Caco-2 (cell line): ENCODE measurements at regions of chr6 and their contacts with region 1.

Region 1: DNA sequence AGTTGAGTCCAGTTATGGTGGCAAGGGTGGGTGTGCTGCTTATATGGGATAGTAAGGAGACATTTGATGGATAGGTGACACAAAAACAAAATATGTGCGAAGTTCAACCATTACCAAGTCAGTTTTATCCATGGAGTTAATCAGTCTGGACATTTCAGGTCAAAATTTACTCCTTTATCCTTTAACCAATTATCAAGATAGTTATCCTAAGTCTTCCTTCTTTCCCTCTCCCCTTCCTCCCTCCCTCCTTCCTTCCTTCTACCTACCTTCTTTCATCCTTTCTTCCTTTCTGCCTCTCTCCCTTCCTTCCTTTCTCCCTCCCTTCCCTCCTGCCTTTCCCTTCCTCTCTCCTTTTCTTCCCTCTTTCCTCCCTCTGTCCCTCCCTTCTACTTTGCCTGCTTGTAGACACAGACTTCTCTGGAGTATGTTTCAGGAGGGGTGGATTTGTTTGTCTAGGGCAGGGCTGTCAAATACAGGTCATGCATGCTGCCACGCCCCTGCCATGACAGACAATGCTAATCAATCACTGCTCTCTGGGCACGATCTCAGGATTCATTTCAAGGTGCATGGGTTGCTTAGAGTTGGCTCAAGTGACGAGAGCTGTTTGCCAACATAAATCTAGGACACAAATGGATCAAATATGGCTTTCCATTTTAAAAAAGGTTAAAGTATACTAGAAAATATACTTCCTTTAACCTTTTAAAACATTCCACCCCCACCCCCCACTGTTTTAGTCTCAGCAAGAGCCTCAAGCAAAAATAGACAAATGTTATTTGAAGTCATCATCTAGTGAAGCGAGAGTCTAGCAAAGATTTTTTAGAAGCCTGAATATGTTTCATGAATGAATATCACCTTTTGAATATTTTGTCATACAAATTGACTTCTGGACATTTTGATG is 281.6 kb upstream of the CITED2 start:
- DNase-seq: peak; percentile 81 to 90
- H3K4me3 ChIP-seq: no peak overlapping the region
- H3K4me3 Mint-ChIP-seq: peak overlapping the region; percentile 60
- H3K27ac Mint-ChIP-seq: peak overlapping the region; percentile 88
- H3K4me1 ChIP-seq: peaks cover 46% of the 10 kb centered on the region
- H3K4me1 Mint-ChIP-seq: peaks cover 33% of the 10 kb centered on the region
- H3K27me3 ChIP-seq: no peaks in the 10 kb centered on the region
- H3K27me3 Mint-ChIP-seq: no peaks in the 10 kb centered on the region
- CTCF ChIP-seq: no peak

Region 2: DNA sequence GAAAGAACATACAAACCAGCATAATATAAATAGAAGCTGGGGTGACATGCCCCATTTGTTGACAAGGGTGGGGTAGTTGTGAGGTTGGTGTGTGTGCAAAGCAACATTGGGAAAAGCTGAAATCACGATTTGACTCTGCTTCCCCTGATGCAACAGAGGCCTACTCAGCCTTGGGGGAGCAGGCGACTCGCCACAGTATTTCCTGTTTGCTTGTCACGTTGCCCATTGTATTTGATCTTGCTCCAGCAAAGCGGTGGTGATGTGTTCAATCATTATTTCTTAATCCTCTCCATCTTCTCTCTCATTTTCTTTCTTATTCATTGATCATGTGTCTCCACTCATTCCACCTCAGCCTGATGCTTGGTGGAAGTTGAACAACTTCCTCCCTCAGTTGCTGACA is 115.8 kb before region 1 on chr6:
- CTCF ChIA-PET with region 1: no interaction called
- POLR2A ChIA-PET with region 1: no interaction called
- intact Hi-C with region 1: loop called (anchors 5 kb)
- DNase-seq: no peak
- H3K4me3 ChIP-seq: no peak overlapping the region
- H3K4me3 Mint-ChIP-seq: peak overlapping the region; percentile 57
- H3K27ac Mint-ChIP-seq: peak overlapping the region; percentile 68
- H3K4me1 ChIP-seq: peaks cover 45% of the 10 kb centered on the region
- H3K4me1 Mint-ChIP-seq: peaks cover 29% of the 10 kb centered on the region
- H3K27me3 ChIP-seq: no peaks in the 10 kb centered on the region
- H3K27me3 Mint-ChIP-seq: no peaks in the 10 kb centered on the region
- CTCF ChIP-seq: no peak

Region 3: DNA sequence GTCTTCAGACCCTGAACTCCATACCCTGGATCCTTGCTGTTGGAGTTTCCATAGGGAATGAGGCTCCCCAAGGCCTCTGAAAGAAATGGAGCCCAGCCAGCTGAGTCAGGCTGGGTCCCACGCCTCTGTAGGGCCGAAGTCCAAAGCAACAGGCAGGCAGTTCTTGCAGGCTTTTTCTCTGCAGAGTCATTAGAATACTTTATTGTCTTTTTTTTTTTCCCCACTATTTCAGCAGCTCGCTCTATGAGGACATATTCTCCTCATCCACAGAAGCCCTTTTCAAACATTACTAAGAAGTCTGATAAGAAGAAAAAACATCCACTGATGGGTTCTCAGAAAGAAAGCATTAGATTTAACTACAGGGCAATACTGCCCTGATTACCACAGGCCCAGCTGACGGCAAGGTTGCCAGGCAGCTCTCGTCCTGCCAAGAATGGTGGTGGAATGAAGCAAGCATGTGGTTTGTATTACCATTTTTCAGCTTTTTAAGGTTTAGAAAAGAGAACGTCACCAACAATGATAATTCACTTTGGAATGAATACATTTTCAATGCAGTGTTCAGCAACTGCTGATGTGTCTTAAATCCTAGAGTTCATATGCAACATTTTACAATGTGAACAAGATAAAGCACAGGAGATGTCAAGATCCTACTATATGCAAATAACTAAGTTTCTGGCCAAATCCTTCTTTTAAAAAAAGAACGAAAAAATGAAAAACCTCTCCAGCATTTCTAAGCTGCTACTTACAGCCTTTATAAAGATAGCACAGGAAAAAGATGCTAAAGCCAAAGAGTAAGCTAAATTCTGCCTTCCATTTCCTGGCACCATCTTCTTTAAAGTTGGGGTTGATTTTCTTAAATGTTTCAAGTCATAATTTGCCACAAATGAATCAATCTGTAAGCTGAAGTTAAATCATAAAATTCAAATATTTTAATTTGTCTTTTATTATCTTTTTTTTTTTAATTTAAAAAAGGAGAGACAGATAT is 58.0 kb before region 1 on chr6:
- CTCF ChIA-PET with region 1: no interaction called
- POLR2A ChIA-PET with region 1: no interaction called
- intact Hi-C with region 1: loop called (anchors 2 kb)
- DNase-seq: peak; percentile 78 to 81
- H3K4me3 ChIP-seq: no peak overlapping the region
- H3K4me3 Mint-ChIP-seq: peak overlapping the region; percentile 59
- H3K27ac Mint-ChIP-seq: peak overlapping the region; percentile 94
- H3K4me1 ChIP-seq: peaks cover 39% of the 10 kb centered on the region
- H3K4me1 Mint-ChIP-seq: peaks cover 31% of the 10 kb centered on the region
- H3K27me3 ChIP-seq: no peaks in the 10 kb centered on the region
- H3K27me3 Mint-ChIP-seq: no peaks in the 10 kb centered on the region
- CTCF ChIP-seq: no peak

Region 4: GRCh38 chr6:139708337-139709199 is 52.5 kb after region 1 on chr6:
- CTCF ChIA-PET with region 1: no interaction called
- POLR2A ChIA-PET with region 1: no interaction called
- intact Hi-C with region 1: loop called (anchors 1 kb)
- DNase-seq: peak; percentile 64 to 76
- H3K4me3 ChIP-seq: no peak overlapping the region
- H3K4me3 Mint-ChIP-seq: peak overlapping the region; percentile 54
- H3K27ac Mint-ChIP-seq: peak overlapping the region; percentile 72
- H3K4me1 ChIP-seq: peaks cover 38% of the 10 kb centered on the region
- H3K4me1 Mint-ChIP-seq: peaks cover 12% of the 10 kb centered on the region
- H3K27me3 ChIP-seq: no peaks in the 10 kb centered on the region
- H3K27me3 Mint-ChIP-seq: no peaks in the 10 kb centered on the region
- CTCF ChIP-seq: no peak

Region 5: DNA sequence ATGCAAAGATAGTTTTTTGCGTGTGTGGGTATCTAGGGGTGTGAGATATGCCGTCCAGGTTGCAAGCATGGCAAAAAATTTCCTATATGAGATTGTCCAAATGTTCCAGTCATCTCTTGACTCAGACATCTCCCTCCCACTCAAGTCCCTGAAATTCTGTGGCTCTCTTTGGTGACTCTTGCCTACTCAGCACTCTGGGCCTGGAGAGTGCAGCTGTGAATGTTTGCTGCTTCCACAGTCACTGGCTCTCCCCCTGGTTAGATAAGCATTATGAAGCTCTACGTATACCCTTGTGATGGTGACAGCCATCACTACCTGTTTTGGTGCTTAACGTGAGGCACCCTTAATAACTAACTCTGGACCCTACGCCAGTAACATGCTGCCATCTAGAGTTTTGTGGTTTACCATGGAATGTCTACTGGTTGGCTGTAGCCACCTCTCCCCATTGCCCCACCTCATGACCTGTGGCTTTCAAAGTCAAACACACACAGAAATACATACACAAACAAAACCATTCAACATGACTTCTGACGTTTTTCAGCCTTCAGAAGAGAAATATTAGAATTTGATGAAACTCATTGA is 340.3 kb after region 1 on chr6:
- CTCF ChIA-PET with region 1: no interaction called
- POLR2A ChIA-PET with region 1: no interaction called
- intact Hi-C with region 1: loop called (anchors 5 kb)
- DNase-seq: peak; percentile 64 to 71
- H3K4me3 ChIP-seq: no peak overlapping the region
- H3K4me3 Mint-ChIP-seq: no peak overlapping the region
- H3K27ac Mint-ChIP-seq: no peak overlapping the region
- H3K4me1 ChIP-seq: no peaks in the 10 kb centered on the region
- H3K4me1 Mint-ChIP-seq: peaks cover 6% of the 10 kb centered on the region
- H3K27me3 ChIP-seq: no peaks in the 10 kb centered on the region
- H3K27me3 Mint-ChIP-seq: no peaks in the 10 kb centered on the region
- CTCF ChIP-seq: peak; percentile 54 to 55